Aorta (tissue), 5 donors: ENCODE measurements at regions of chr11 and their contacts with region 1.

Region 1: GRCh38 chr11:30825723-30826122 is 239.6 kb upstream of the MPPED2 start:
- DNase-seq: no peak
- ATAC-seq: no peak
- H3K4me3 ChIP-seq: no peak overlapping the region
- H3K27ac ChIP-seq: peak overlapping the region in 1 of 2 donors; percentile 67
- H3K4me1 ChIP-seq: peaks cover 3 to 4% of the 10 kb centered on the region in 2 donors
- H3K27me3 ChIP-seq: no peaks in the 10 kb centered on the region

Region 2: DNA sequence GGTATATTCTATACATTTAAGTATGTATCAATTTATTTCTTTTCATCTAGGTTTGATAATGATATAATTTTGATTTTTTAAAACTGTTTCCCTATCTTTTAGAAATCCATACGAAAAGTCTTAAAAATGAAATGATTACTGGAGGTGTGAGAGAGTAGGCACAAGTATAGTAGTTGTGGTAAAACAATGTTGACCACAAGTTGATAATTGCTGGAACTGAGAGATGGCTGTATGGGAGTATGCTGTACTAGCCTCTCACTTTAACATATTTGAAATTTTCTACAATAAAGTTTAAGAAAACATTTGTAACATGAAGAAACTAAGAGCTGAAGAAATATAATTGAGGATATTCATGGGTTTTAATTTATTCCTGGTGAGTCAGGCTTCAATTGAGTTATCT is 564.9 kb before region 1 on chr11:
- intact Hi-C with region 1: no loop called
- DNase-seq: no peak
- ATAC-seq: no peak
- H3K4me3 ChIP-seq: no peak overlapping the region
- H3K27ac ChIP-seq: no peak overlapping the region
- H3K4me1 ChIP-seq: no peaks in the 10 kb centered on the region
- H3K27me3 ChIP-seq: no peaks in the 10 kb centered on the region

Region 3: DNA sequence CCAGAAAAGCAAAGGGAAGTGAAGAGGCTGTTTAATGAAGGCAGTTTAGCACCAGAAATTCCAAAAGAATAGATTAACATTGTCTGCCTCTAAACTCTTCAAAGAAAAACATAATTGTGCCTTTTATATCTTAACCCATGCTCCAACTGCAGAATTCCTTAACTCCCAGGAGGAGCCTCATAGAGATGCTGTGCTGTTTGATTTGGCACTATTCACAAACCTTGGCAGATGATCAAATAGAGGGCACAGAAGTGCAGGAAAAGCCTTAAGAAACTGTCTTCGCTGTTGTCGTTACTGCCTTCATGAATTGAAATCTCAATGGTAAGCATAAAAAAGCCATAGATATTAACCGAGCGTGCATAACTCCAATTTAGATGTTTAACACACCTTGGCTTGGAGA is 115.5 kb before region 1 on chr11:
- intact Hi-C with region 1: loop called in 1 of 2 experiments (anchors 5 kb)
- DNase-seq: no peak
- ATAC-seq: no peak
- H3K4me3 ChIP-seq: no peak overlapping the region
- H3K27ac ChIP-seq: no peak overlapping the region
- H3K4me1 ChIP-seq: peaks cover 3 to 13% of the 10 kb centered on the region in 2 donors
- H3K27me3 ChIP-seq: no peaks in the 10 kb centered on the region

Region 4: DNA sequence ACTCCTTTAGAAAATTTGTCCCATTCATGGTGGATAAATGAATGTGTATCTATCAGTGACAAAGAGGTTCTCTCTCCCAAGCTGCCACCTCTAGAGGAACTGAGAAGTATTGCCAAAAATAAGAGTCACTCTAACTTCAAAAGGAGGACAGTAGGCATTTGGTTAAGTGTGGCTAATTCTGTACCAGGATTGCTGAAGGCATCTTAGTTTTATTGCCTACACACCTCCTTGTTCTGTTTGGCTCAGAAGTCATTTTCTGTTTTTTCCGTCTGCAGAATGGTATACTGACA is 50.5 kb before region 1 on chr11:
- intact Hi-C with region 1: no loop called
- DNase-seq: no peak
- ATAC-seq: peak; percentile 7
- H3K4me3 ChIP-seq: no peak overlapping the region
- H3K27ac ChIP-seq: no peak overlapping the region
- H3K4me1 ChIP-seq: peaks cover 2 to 4% of the 10 kb centered on the region in 2 donors
- H3K27me3 ChIP-seq: no peaks in the 10 kb centered on the region